ENCODE measurements at regions of chr19 and their contacts with region 1.

Region 1: GRCh38 chr19:9435279-9436268 is at the start of gene ZNF266:
- DNase-seq: peak; percentile 87
- H3K4me3 ChIP-seq: peak within 1 kb of the TSS; percentile 70 to 95 (median 84)
- H3K27ac ChIP-seq: peak within 1 kb of the TSS; percentile 78
- H3K4me1 ChIP-seq: no peaks in the 10 kb centered on the region
- H3K27me3 ChIP-seq: no peaks in the 10 kb centered on the region
- CTCF ChIP-seq: peak; percentile 53 to 74
- total RNA-seq, gene ZNF266: 10.5 to 14.2 TPM

Region 2: GRCh38 chr19:9329999-9330398 is 105.6 kb before region 1 on chr19:
- CTCF ChIA-PET with region 1: no interaction called
- dilution Hi-C with region 1: no loop called
- in situ Hi-C with region 1: no loop called
- intact Hi-C with region 1: no loop called
- DNase-seq: no peak
- H3K4me3 ChIP-seq: no peak overlapping the region
- H3K27ac ChIP-seq: no peak overlapping the region
- H3K4me1 ChIP-seq: no peaks in the 10 kb centered on the region
- H3K27me3 ChIP-seq: no peaks in the 10 kb centered on the region
- CTCF ChIP-seq: no peak

Region 3: DNA sequence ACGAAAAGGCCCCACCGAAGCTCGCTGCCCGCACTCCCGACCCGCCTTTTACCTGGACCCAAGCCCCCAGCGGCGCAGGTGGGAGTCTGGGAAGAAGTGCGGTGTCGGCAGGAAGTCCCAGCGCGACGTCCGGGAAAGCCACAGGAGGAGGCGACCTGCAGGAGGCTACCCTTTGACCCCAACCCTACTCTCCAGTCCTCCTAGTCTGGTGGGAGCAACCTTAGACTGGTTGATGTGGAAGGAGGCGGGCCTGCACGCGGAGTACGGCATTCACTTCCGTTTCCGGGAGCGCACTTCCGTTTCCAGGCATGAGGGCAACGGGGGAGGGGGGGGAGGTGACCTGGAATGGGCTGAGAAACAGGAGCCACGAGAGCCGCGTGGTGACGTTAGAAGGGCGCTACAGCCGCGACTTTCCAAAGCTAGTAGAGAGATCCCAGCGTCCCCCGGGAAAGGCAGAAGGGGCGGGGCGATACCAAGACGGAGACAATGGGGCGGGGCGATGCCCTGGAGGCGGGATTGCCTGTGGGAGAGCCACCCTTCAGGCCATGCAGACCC is 28.7 kb before region 1 on chr19:
- CTCF ChIA-PET with region 1: no interaction called
- dilution Hi-C with region 1: no loop called
- in situ Hi-C with region 1: no loop called
- intact Hi-C with region 1: loop called (anchors 2 kb)
- DNase-seq: peak; percentile 78
- H3K4me3 ChIP-seq: peak overlapping the region; percentile 61 to 77 (median 65)
- H3K27ac ChIP-seq: no peak overlapping the region
- H3K4me1 ChIP-seq: no peaks in the 10 kb centered on the region
- H3K27me3 ChIP-seq: no peaks in the 10 kb centered on the region
- CTCF ChIP-seq: no peak

Region 4: DNA sequence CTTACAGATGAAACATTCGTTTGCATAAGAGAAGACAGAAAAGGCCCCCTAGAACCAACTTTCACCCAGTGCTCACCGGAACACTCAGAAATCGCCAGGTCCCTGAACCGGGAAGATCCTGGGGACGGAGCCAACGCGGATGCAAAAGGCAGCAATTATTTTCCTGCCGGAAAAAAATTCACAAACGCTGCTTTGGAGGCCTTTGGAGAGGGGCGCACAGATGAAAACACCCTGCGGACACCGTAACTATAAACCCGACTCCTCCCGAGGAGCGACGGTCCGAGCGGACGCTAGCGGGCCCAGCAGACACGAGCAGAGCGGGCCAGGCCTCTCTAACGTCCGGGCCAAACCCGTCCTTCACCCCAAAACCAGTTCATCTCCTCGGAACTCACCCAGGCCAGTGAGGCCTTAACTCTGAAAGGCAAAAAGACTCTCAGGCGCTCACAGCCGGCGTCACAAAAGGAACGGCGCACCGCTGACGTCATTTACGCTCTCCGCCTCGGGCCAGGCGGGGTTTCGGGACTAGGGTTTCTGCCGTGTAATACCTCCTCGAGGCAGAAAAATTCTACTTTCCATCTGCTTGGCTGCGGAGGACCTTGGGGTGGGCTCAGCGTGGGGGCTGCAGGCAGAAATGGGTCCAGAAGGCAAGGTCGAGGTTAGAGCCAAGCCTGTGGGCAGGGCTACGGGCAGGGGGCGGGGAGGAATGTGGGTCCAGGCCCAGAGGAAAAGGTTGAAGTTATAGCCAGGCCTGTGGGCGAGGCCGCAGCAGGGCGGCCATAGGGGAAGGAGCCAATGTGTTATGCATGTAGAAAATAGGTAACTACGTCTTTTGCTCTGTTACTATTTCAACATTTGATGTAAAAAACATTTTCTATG is 102.8 kb after region 1 on chr19 and contains the start of gene ZNF426:
- CTCF ChIA-PET with region 1: no interaction called
- dilution Hi-C with region 1: no loop called
- in situ Hi-C with region 1: no loop called
- intact Hi-C with region 1: loop called (anchors 10 kb)
- DNase-seq: peak; percentile 88
- H3K4me3 ChIP-seq: peak within 1 kb of the TSS; percentile 60 to 89 (median 69)
- H3K27ac ChIP-seq: peak within 1 kb of the TSS; percentile 93
- H3K4me1 ChIP-seq: peaks cover 3% of the 10 kb centered on the region
- H3K27me3 ChIP-seq: no peaks in the 10 kb centered on the region
- CTCF ChIP-seq: no peak
- total RNA-seq, gene ZNF426: 16.2 to 28.0 TPM

Region 5: DNA sequence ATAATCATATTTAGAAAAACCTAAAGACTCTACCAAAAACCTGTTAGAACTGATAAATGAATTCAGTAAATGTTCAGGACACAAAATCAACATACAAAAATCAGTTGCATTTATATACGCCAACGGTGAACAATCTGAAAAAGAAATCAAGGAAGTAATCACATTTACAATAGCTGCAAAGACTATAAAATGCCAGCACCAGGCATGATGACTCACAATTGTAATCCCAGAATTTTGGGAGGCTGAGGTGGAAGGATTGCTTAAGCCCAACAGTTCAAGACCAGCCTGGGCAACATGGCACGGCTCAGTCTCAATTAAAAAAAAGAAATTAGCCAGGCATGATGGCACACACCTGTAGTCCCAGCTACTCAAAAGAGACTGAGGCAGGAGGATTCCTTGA is 232.3 kb after region 1 on chr19:
- CTCF ChIA-PET with region 1: no interaction called
- dilution Hi-C with region 1: no loop called
- in situ Hi-C with region 1: no loop called
- intact Hi-C with region 1: no loop called
- DNase-seq: no peak
- H3K4me3 ChIP-seq: no peak overlapping the region
- H3K27ac ChIP-seq: no peak overlapping the region
- H3K4me1 ChIP-seq: no peaks in the 10 kb centered on the region
- H3K27me3 ChIP-seq: no peaks in the 10 kb centered on the region
- CTCF ChIP-seq: no peak

Measured in mammary epithelial cell (primary cell).